HepG2 (cell line): ENCODE measurements at regions of chr20 and their contacts with region 1.

Region 1: DNA sequence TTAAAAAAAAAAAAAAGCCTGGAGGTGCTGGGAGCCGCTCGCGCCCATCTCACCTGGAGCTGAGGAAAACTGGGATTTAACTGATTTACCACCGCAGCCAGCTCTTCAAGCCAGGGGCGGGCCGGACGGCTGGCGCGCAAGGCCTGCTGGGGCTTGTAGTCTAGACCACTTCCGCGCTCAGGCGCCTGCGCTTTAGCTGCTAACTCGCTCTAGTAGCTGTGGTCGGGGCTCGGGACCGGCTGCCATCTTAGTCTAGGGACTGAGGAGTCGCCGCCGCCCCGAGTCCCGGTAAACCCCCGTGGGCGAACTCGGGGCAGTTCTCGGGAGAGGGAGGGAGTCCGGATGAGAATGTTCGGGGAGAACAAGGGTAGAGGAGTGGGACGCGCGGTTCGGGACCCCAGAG is at the start of gene ITCH:
- DNase-seq: peak; percentile 97
- ATAC-seq: peak; percentile 98
- H3K4me3 ChIP-seq: peak within 1 kb of the TSS; percentile 89 to 100 (median 95)
- H3K27ac ChIP-seq: peak within 1 kb of the TSS; percentile 78
- H3K4me1 ChIP-seq: peaks cover 58% of the 10 kb centered on the region
- H3K27me3 ChIP-seq: no peaks in the 10 kb centered on the region; a peak in 1 of 5 replicates
- CTCF ChIP-seq: no peak
- EP300 ChIP-seq: no peak
- POLR2A ChIP-seq: peak; percentile 86 to 88
- RAD21 ChIP-seq: peak; percentile 15; the same call in 1 of the 2 replicates
- total RNA-seq, gene ITCH: 112 and 162 TPM in 2 replicates

Region 2: GRCh38 chr20:34318609-34319443 is 44.2 kb before region 1 on chr20:
- CTCF ChIA-PET with region 1: no interaction called
- POLR2A ChIA-PET with region 1: interaction called, 105 read pairs
- in situ Hi-C with region 1: loop called (anchors 5 kb)
- intact Hi-C with region 1: no loop called
- DNase-seq: peak; percentile 69
- ATAC-seq: peak; percentile 45
- H3K4me3 ChIP-seq: peak overlapping the region in 1 of 3 experiments; percentile 11; a peak in 1 of 6 replicates
- H3K27ac ChIP-seq: no peak overlapping the region
- H3K4me1 ChIP-seq: peaks cover 83% of the 10 kb centered on the region
- H3K27me3 ChIP-seq: no peaks in the 10 kb centered on the region
- CTCF ChIP-seq: no peak
- EP300 ChIP-seq: peak in 1 of 2 experiments; percentile 73; a peak in 2 of 4 replicates
- POLR2A ChIP-seq: no peak
- RAD21 ChIP-seq: no peak

Region 3: GRCh38 chr20:34343458-34344211 is 19.4 kb before region 1 on chr20:
- CTCF ChIA-PET with region 1: no interaction called
- POLR2A ChIA-PET with region 1: interaction called, 46 read pairs
- in situ Hi-C with region 1: no loop called
- intact Hi-C with region 1: loop called (anchors 2 kb)
- DNase-seq: no peak
- ATAC-seq: peak; percentile 80
- H3K4me3 ChIP-seq: peak overlapping the region; percentile 19 to 58 (median 40); a peak in 5 of 6 replicates
- H3K27ac ChIP-seq: peak overlapping the region; percentile 28
- H3K4me1 ChIP-seq: peaks cover 56% of the 10 kb centered on the region
- H3K27me3 ChIP-seq: no peaks in the 10 kb centered on the region
- CTCF ChIP-seq: no peak
- EP300 ChIP-seq: no peak
- POLR2A ChIP-seq: no peak
- RAD21 ChIP-seq: no peak

Region 4: DNA sequence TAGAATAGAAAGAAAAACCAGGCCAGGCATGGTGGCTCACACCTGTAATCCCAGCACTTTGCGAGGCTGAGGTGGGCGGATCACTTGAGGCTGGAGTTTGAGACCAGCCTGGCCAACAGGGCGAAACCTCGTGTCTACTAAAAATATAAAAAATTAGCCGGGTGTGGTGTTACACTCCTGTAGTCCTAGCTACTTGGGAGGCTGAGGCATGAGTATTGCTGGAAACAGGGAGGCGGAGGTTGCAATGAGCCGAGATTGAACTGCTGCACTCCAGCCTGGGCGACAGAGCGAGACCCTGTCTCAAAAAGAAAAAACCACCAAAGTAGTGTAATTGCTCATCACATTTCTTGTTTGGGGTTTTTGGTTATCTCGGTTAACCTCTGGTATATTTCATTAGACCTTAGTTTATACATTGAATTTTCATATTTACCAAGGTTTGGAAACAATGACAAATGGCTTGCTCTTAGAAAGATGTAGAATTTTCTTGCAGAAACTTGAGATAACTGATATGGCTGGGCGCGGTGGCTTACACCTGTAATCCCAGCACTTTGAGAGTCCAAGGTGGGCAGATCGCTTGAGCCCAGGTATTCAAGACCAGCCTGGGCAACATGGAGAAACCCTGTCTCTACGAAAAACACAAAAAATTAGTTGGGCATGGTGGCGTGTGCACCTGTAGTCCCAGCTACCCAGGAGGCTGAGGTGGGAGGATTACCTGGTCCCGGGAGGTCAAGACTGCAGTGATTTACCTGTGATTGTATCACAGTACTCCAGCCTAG is 14.2 kb after region 1 on chr20:
- CTCF ChIA-PET with region 1: no interaction called
- POLR2A ChIA-PET with region 1: interaction called, 56 read pairs
- in situ Hi-C with region 1: no loop called
- intact Hi-C with region 1: no loop called
- DNase-seq: no peak
- ATAC-seq: no peak
- H3K4me3 ChIP-seq: no peak overlapping the region
- H3K27ac ChIP-seq: no peak overlapping the region
- H3K4me1 ChIP-seq: peaks cover 44% of the 10 kb centered on the region
- H3K27me3 ChIP-seq: no peaks in the 10 kb centered on the region
- CTCF ChIP-seq: no peak
- EP300 ChIP-seq: no peak
- POLR2A ChIP-seq: no peak
- RAD21 ChIP-seq: no peak

Region 5: GRCh38 chr20:34516247-34517113 is 153.4 kb after region 1 on chr20 and contains the start of gene DYNLRB1:
- CTCF ChIA-PET with region 1: no interaction called
- POLR2A ChIA-PET with region 1: interaction called, 26 read pairs
- in situ Hi-C with region 1: no loop called
- intact Hi-C with region 1: no loop called
- DNase-seq: peak; percentile 98
- ATAC-seq: peak; percentile 91
- H3K4me3 ChIP-seq: peak within 1 kb of the TSS; percentile 85 to 89 (median 87)
- H3K27ac ChIP-seq: peak within 1 kb of the TSS; percentile 80
- H3K4me1 ChIP-seq: peaks cover 62% of the 10 kb centered on the region
- H3K27me3 ChIP-seq: no peaks in the 10 kb centered on the region; a peak in 1 of 5 replicates
- CTCF ChIP-seq: 0 out of 2 replicates have a peak, but pooled peaks have one; percentile 15
- EP300 ChIP-seq: no peak; a peak in 2 of 4 replicates
- POLR2A ChIP-seq: peak; percentile 90 to 99
- RAD21 ChIP-seq: peak; percentile 55
- total RNA-seq, gene DYNLRB1: 140 and 151 TPM in 2 replicates